GM12878 (cell line): ENCODE measurements at regions of chr1 and their contacts with region 1.

Region 1: GRCh38 chr1:155172732-155173477 is at the start of gene KRTCAP2:
- DNase-seq: peak; percentile 89
- ATAC-seq: peak; percentile 89
- H3K4me3 ChIP-seq: peak within 1 kb of the TSS; percentile 73
- H3K27ac ChIP-seq: peak within 1 kb of the TSS; percentile 93
- H3K4me1 ChIP-seq: peaks cover 26% of the 10 kb centered on the region
- H3K27me3 ChIP-seq: no peaks in the 10 kb centered on the region
- CTCF ChIP-seq: peak; percentile 96 to 99 (median 99); a peak in 5 of 6 replicates
- EP300 ChIP-seq: no peak
- POLR2A ChIP-seq: peak; percentile 86
- RAD21 ChIP-seq: peak; percentile 26; the same call in 1 of the 2 replicates
- polyA plus RNA-seq, gene KRTCAP2: 144 to 181 TPM

Region 2: DNA sequence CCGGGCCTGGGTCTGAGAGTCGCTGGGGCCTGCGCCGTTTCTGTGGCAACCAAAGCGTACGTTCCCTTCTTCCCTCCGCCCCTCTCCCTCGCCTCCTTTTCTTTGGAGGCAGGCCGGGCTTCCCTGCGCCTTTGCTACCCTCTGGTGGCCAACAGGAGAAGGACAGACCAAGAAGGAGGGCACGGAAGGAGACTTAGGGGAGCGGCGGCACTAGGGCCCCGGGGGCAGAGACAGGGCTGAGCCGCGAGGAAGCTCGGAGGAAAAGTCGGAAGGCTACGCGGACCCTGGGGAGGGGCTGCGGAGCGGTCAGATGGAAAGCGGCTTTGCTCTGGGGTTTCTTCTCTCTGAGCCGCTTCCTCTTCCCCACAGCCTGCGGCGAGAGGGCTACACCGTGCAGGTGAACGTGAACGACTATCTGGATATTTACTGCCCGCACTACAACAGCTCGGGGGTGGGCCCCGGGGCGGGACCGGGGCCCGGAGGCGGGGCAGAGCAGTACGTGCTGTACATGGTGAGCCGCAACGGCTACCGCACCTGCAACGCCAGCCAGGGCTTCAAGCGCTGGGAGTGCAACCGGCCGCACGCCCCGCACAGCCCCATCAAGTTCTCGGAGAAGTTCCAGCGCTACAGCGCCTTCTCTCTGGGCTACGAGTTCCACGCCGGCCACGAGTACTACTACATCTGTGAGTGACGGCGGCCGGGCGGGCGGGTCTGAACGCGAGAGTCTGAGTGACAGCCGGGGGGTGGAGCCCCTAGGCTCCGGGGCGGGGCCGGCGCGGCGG is 88.0 kb before region 1 on chr1:
- CTCF ChIA-PET with region 1: interaction called, 284 read pairs
- POLR2A ChIA-PET with region 1: interaction called, 10 read pairs
- RAD21 ChIA-PET with region 1: interaction called, 71 read pairs
- SMC1A ChIA-PET with region 1: interaction called, 8 read pairs
- in situ Hi-C with region 1: loop called (anchors 5 kb)
- intact Hi-C with region 1: no loop called
- DNase-seq: peak; percentile 72
- ATAC-seq: peak; percentile 90
- H3K4me3 ChIP-seq: peak overlapping the region; percentile 72
- H3K27ac ChIP-seq: peak overlapping the region; percentile 72
- H3K4me1 ChIP-seq: peaks cover 33% of the 10 kb centered on the region
- H3K27me3 ChIP-seq: peaks cover 17 to 23% of the 10 kb centered on the region in 2 experiments
- CTCF ChIP-seq: peak; percentile 90 to 99 (median 95)
- EP300 ChIP-seq: 0 out of 4 replicates have a peak, but pooled peaks of 1 of the 2 experiments have one; percentile 48
- POLR2A ChIP-seq: no peak; the same call in 1 of the 2 replicates
- RAD21 ChIP-seq: peak; percentile 99

Region 3: GRCh38 chr1:155099331-155099730 is 73.6 kb before region 1 on chr1:
- CTCF ChIA-PET with region 1: interaction called, 89 read pairs
- POLR2A ChIA-PET with region 1: no interaction called
- RAD21 ChIA-PET with region 1: interaction called, 14 read pairs
- SMC1A ChIA-PET with region 1: interaction called, 37 read pairs
- in situ Hi-C with region 1: loop called (anchors 5 kb)
- intact Hi-C with region 1: no loop called
- DNase-seq: no peak
- ATAC-seq: no peak
- H3K4me3 ChIP-seq: no peak overlapping the region
- H3K27ac ChIP-seq: no peak overlapping the region
- H3K4me1 ChIP-seq: no peaks in the 10 kb centered on the region
- H3K27me3 ChIP-seq: no peaks in the 10 kb centered on the region
- CTCF ChIP-seq: no peak
- EP300 ChIP-seq: no peak
- POLR2A ChIP-seq: no peak
- RAD21 ChIP-seq: no peak

Region 4: DNA sequence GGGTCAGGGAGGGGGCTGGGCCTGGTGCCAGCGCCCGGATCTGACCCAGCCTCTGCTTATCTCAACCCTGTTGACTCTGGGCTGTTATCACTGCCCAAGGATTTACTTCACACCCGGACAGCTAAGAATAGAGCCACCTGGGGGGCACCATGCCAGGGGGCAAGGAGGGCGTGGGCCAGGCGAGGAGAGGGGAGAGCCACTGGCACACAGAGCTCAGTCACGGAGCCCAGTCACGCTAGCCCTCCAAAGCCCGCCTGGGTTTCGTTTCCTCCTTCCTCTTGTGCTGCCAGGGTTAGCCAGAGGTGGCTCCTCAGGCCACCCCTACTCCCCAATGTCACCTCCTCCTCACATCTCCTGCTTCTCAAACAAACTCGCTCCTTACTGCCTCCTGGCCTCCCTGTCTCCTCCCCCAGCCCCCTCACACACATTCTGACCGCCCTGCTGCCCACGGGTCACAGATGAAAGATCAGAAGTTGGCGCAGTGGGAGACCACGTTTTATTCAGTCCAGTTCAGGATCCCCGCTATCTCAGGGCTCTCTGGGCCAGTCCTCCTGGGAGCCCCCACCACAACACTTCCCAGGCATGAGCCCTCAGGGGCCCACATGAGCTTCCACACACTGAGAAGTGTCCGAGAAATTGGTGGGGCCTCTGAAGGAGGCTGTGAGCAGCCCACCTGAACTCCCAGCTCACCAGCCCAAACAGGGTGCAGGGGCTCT is 12.6 kb after region 1 on chr1:
- CTCF ChIA-PET with region 1: interaction called, 63 read pairs
- POLR2A ChIA-PET with region 1: interaction called, 14 read pairs
- RAD21 ChIA-PET with region 1: interaction called, 7 read pairs
- SMC1A ChIA-PET with region 1: interaction called, 14 read pairs
- in situ Hi-C with region 1: no loop called
- intact Hi-C with region 1: no loop called
- DNase-seq: peak; percentile 72
- ATAC-seq: peak; percentile 99
- H3K4me3 ChIP-seq: no peak overlapping the region
- H3K27ac ChIP-seq: peak overlapping the region; percentile 72
- H3K4me1 ChIP-seq: peaks cover 21% of the 10 kb centered on the region
- H3K27me3 ChIP-seq: no peaks in the 10 kb centered on the region
- CTCF ChIP-seq: peak; percentile 19 to 28 (median 28); a peak in 3 of 6 replicates
- EP300 ChIP-seq: peak in 1 of 2 experiments; percentile 71; a peak in 3 of 4 replicates
- POLR2A ChIP-seq: peak; percentile 65
- RAD21 ChIP-seq: no peak

Region 5: DNA sequence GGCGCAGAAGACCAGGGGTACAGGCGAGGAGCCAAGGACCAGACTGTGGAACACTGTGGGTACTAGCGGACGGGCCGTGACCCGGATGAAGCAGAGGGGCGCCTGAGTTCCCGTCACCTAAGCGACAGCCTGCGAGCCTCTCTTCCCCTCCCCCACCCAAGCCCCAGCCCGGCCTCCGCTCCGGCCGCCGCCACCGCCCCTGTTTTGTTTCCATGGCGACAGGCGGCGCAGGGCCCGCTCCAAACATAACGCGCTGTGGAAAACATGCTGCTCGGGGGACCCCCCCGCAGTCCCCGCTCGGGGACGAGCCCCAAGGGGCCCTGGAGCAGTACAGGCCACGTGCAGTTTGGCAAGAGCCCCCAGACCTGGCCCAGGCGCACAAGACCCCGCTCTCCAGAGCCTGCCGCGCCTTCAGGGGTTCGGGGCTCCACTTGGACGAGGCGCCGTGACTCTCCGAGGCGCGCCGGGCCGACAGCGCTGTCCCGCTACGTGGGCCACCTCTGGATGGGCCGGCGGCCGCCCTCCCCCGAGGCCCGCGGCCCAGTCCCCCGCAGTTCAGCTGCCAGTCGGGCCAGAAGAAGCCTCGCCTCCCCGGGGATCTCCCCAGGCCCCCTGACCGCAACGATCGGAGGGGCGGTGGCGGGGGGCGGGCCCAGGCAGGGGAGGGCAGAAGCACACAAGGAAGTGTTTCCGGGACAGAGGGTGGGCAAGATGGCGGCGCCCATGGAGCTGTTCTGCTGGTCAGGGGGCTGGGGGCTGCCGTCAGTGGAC is 35.8 kb after region 1 on chr1 and contains the start of gene MTX1:
- CTCF ChIA-PET with region 1: interaction called, 26 read pairs
- POLR2A ChIA-PET with region 1: interaction called, 3 read pairs
- RAD21 ChIA-PET with region 1: interaction called, 6 read pairs
- SMC1A ChIA-PET with region 1: interaction called, 7 read pairs
- in situ Hi-C with region 1: no loop called
- intact Hi-C with region 1: no loop called
- DNase-seq: no peak
- ATAC-seq: peak; percentile 93
- H3K4me3 ChIP-seq: peak within 1 kb of the TSS; percentile 98
- H3K27ac ChIP-seq: peak within 1 kb of the TSS; percentile 81
- H3K4me1 ChIP-seq: peaks cover 19% of the 10 kb centered on the region
- H3K27me3 ChIP-seq: no peaks in the 10 kb centered on the region
- CTCF ChIP-seq: no peak
- EP300 ChIP-seq: peak in 1 of 2 experiments; percentile 58; a peak in 1 of 4 replicates
- POLR2A ChIP-seq: peak; percentile 92
- RAD21 ChIP-seq: no peak
- polyA plus RNA-seq, gene MTX1: 15.8 to 25.5 TPM

Region 6: GRCh38 chr1:155244368-155245162 is 71.7 kb after region 1 on chr1:
- CTCF ChIA-PET with region 1: interaction called, 13 read pairs
- POLR2A ChIA-PET with region 1: interaction called, 12 read pairs
- RAD21 ChIA-PET with region 1: interaction called, 3 read pairs
- SMC1A ChIA-PET with region 1: interaction called, 5 read pairs
- in situ Hi-C with region 1: no loop called
- intact Hi-C with region 1: no loop called
- DNase-seq: peak; percentile 93
- ATAC-seq: peak; percentile 97
- H3K4me3 ChIP-seq: peak overlapping the region; percentile 74
- H3K27ac ChIP-seq: peak overlapping the region; percentile 79
- H3K4me1 ChIP-seq: peaks cover 14% of the 10 kb centered on the region
- H3K27me3 ChIP-seq: no peaks in the 10 kb centered on the region
- CTCF ChIP-seq: peak; percentile 12 to 31 (median 17); a peak in 3 of 6 replicates
- EP300 ChIP-seq: peak; percentile 40 to 48; a peak in 2 of 4 replicates
- POLR2A ChIP-seq: peak; percentile 96
- RAD21 ChIP-seq: 0 out of 2 replicates have a peak, but pooled peaks have one; percentile 28

Region 7: GRCh38 chr1:155295183-155295941 is 122.5 kb after region 1 on chr1:
- CTCF ChIA-PET with region 1: no interaction called
- POLR2A ChIA-PET with region 1: no interaction called
- RAD21 ChIA-PET with region 1: no interaction called
- SMC1A ChIA-PET with region 1: no interaction called
- in situ Hi-C with region 1: no loop called
- intact Hi-C with region 1: no loop called
- DNase-seq: no peak
- ATAC-seq: no peak
- H3K4me3 ChIP-seq: no peak overlapping the region
- H3K27ac ChIP-seq: no peak overlapping the region
- H3K4me1 ChIP-seq: peaks cover 3% of the 10 kb centered on the region; the same call in 1 of the 2 replicates
- H3K27me3 ChIP-seq: no peaks in the 10 kb centered on the region; a peak in 1 of 4 replicates
- CTCF ChIP-seq: no peak
- EP300 ChIP-seq: no peak
- POLR2A ChIP-seq: no peak
- RAD21 ChIP-seq: no peak